ENCODE measurements at regions of chr11 and their contacts with region 1.

Region 1: DNA sequence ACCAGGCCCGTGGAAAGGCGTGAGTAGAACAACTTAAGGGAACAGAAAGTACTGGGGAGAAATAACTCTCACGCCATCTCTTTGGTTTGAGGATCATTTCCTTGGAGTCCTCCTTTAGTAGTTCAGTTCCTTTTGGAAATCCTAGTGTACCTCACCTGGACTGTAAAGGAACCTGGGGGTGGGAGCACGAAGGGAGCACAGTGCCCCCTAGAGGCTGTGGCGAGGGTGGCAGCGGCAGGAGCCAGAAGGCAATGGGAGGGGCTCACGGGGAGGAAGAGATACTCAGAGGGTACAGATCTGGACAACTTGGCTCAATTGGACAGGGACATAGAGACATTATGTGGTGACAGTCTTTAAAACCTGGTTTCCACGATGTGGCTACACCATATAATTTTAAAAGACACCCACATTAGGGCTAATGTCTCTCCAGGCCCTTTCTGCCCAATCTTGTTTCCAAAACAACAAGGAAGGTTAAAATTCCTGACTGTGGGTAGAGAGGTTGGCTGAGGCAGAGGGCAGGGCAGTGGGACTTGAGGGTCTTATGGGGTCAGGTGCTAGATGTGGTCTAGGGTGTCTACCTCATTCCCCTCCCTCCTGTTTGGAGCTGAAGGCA is 87.0 kb downstream of the CSNK2A3 start:
- DNase-seq: peak; percentile 56
- H3K4me3 ChIP-seq: no peak overlapping the region
- H3K27ac ChIP-seq: peak overlapping the region; percentile 5
- H3K4me1 ChIP-seq: peaks cover 20% of the 10 kb centered on the region
- H3K27me3 ChIP-seq: no peaks in the 10 kb centered on the region
- CTCF ChIP-seq: peak; percentile 96 to 97

Region 2: DNA sequence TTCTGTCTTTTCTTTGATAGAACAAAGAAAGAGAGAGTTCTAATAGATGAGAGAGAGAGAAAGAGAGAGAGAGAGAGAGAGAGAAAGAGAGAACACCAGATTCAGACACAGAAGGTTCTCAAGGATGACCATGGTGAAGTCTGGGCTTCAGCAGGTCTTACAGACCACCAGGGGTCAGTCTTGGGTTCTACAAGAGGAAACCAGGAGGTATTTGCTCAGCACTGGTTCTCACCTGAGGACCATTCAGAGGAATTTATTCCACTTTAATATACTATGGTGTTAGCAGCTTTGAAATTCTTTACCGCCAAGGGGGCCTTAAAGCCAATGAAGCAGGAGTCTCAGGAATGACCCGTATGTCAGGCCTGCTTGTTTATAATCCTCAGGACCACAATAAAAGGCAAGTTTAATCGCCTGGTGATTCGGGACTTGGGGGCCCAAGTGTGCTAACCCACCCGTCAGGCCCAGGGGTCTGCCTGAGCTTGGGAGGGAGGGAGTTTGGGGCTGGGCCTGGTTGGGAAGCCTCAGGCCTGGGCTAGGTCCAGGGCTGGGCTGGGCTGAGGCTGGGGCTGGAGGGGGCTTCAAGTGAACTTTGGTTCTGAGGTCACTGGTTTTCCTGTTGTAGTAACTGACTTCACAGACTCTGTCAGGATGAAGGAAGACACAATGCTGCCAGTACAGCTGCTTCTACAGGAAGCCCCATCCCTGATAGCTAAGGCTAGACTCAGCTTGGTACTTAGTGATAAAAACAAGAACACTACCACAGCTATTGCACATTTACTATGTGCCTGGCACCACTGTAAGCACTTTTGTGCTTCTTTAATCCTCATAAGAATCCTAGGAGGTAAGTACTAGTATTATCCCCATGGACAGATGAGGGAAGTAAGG is 229.0 kb before region 1 on chr11:
- CTCF ChIA-PET with region 1: no interaction called
- dilution Hi-C with region 1: no loop called
- in situ Hi-C with region 1: loop called in 1 of 2 experiments (anchors 5 kb)
- intact Hi-C with region 1: loop called (anchors 1 kb)
- DNase-seq: peak; percentile 50
- H3K4me3 ChIP-seq: no peak overlapping the region
- H3K27ac ChIP-seq: no peak overlapping the region
- H3K4me1 ChIP-seq: peaks cover 5% of the 10 kb centered on the region
- H3K27me3 ChIP-seq: no peaks in the 10 kb centered on the region
- CTCF ChIP-seq: peak; percentile 57 to 69

Region 3: GRCh38 chr11:11157185-11157584 is 108.9 kb before region 1 on chr11:
- CTCF ChIA-PET with region 1: no interaction called
- dilution Hi-C with region 1: no loop called
- in situ Hi-C with region 1: no loop called
- intact Hi-C with region 1: loop called (anchors 2 kb)
- DNase-seq: no peak
- H3K4me3 ChIP-seq: no peak overlapping the region
- H3K27ac ChIP-seq: no peak overlapping the region
- H3K4me1 ChIP-seq: no peaks in the 10 kb centered on the region
- H3K27me3 ChIP-seq: no peaks in the 10 kb centered on the region
- CTCF ChIP-seq: peak; percentile 37 to 53

Region 4: GRCh38 chr11:11211186-11211585 is 54.9 kb before region 1 on chr11:
- CTCF ChIA-PET with region 1: no interaction called
- dilution Hi-C with region 1: no loop called
- in situ Hi-C with region 1: no loop called
- intact Hi-C with region 1: no loop called
- DNase-seq: peak; percentile 71
- H3K4me3 ChIP-seq: no peak overlapping the region
- H3K27ac ChIP-seq: no peak overlapping the region
- H3K4me1 ChIP-seq: peaks cover 19% of the 10 kb centered on the region
- H3K27me3 ChIP-seq: no peaks in the 10 kb centered on the region
- CTCF ChIP-seq: no peak

Region 5: GRCh38 chr11:11382824-11383532 is 116.9 kb after region 1 on chr11:
- CTCF ChIA-PET with region 1: no interaction called
- dilution Hi-C with region 1: no loop called
- in situ Hi-C with region 1: no loop called
- intact Hi-C with region 1: no loop called
- DNase-seq: no peak
- H3K4me3 ChIP-seq: no peak overlapping the region
- H3K27ac ChIP-seq: no peak overlapping the region
- H3K4me1 ChIP-seq: no peaks in the 10 kb centered on the region
- H3K27me3 ChIP-seq: no peaks in the 10 kb centered on the region
- CTCF ChIP-seq: no peak

Region 6: DNA sequence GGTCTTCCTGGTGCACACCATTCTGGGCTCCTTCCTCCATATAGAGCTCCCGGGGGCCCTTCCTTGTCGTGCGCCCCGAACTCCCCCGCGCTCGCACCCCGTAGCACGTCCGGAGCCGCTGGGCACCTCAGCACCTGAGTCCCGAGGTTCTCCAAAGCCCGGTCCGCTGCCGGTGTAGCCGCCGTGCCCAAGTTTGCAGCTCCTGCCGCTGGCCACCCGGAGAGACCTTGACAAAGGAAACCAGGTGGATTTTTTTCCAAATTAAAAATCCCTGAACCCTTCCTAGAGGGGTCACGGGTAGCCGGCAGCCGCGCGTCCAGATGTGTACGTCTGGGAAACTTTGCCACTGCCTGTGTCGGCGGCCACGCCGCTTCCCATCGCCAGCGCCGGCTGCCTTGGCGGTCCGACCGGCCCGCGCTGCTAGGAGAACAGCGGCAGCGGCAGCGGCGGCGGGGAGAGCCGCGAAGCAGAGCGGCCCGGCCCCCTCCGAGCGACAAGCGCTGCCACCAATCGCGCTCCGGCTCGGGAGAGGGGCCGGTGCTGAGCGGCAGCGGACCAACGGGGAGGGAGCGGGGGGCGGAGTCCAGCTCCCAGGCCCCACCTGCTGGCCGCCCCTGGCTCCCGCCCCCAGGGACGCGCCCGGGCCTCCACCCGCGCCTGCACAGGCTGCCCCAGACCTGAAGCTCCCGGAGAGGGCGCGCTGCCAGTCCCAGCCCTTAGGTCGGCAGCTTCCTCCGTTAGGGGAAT is 355.6 kb after region 1 on chr11 and contains the start of gene GALNT18:
- CTCF ChIA-PET with region 1: no interaction called
- dilution Hi-C with region 1: no loop called
- in situ Hi-C with region 1: no loop called
- intact Hi-C with region 1: loop called (anchors 2 kb)
- DNase-seq: peak; percentile 97
- H3K4me3 ChIP-seq: peak within 1 kb of the TSS; percentile 68 to 75 (median 75)
- H3K27ac ChIP-seq: peak within 1 kb of the TSS; percentile 51
- H3K4me1 ChIP-seq: peaks cover 27% of the 10 kb centered on the region
- H3K27me3 ChIP-seq: no peaks in the 10 kb centered on the region
- CTCF ChIP-seq: peak; percentile 12 to 53
- total RNA-seq, gene GALNT18: 25.0 to 34.3 TPM

Region 7: GRCh38 chr11:11787305-11788062 is 521.4 kb after region 1 on chr11:
- CTCF ChIA-PET with region 1: no interaction called
- dilution Hi-C with region 1: no loop called
- in situ Hi-C with region 1: no loop called
- intact Hi-C with region 1: loop called (anchors 2 kb)
- DNase-seq: peak; percentile 52
- H3K4me3 ChIP-seq: no peak overlapping the region
- H3K27ac ChIP-seq: no peak overlapping the region
- H3K4me1 ChIP-seq: peaks cover 13% of the 10 kb centered on the region
- H3K27me3 ChIP-seq: no peaks in the 10 kb centered on the region
- CTCF ChIP-seq: peak; percentile 78 to 83